Heart left ventricle (tissue), 16 donors: ENCODE measurements at regions of chr13 and their contacts with region 1.

Region 1: GRCh38 chr13:60862036-60862435 is 465.0 kb downstream of the TDRD3 start:
- DNase-seq: no peak
- ATAC-seq: no peak
- H3K4me3 ChIP-seq: no peak overlapping the region
- H3K27ac ChIP-seq: no peak overlapping the region
- H3K4me1 ChIP-seq: no peaks in the 10 kb centered on the region
- H3K27me3 ChIP-seq: no peaks in the 10 kb centered on the region
- CTCF ChIP-seq: no peak
- POLR2A ChIP-seq: no peak

Region 2: GRCh38 chr13:60881507-60881906 is 19.5 kb after region 1 on chr13:
- intact Hi-C with region 1: loop called in 1 of 10 experiments (anchors 2 kb)
- DNase-seq: no peak
- ATAC-seq: no peak
- H3K4me3 ChIP-seq: no peak overlapping the region
- H3K27ac ChIP-seq: no peak overlapping the region
- H3K4me1 ChIP-seq: no peaks in the 10 kb centered on the region
- H3K27me3 ChIP-seq: no peaks in the 10 kb centered on the region
- CTCF ChIP-seq: no peak
- POLR2A ChIP-seq: no peak

Region 3: GRCh38 chr13:60969656-60970055 is 107.6 kb after region 1 on chr13:
- intact Hi-C with region 1: no loop called
- DNase-seq: no peak
- ATAC-seq: peak in 3 of 4 donors; percentile 37 to 69 (median 39)
- H3K4me3 ChIP-seq: no peak overlapping the region
- H3K27ac ChIP-seq: peak overlapping the region in 1 of 12 donors; percentile 2
- H3K4me1 ChIP-seq: peaks cover 0 to 11% (median 0%) of the 10 kb centered on the region in 12 donors
- H3K27me3 ChIP-seq: no peaks in the 10 kb centered on the region
- CTCF ChIP-seq: no peak
- POLR2A ChIP-seq: no peak